ENCODE measurements at regions of chr6 and their contacts with region 1.

Region 1: GRCh38 chr6:501891-502601 is 110.5 kb downstream of the IRF4 start:
- DNase-seq: peak; percentile 4
- H3K4me3 Mint-ChIP-seq: peak overlapping the region; percentile 60
- H3K27ac Mint-ChIP-seq: no peak overlapping the region
- H3K4me1 Mint-ChIP-seq: no peaks in the 10 kb centered on the region
- H3K27me3 Mint-ChIP-seq: no peaks in the 10 kb centered on the region
- CTCF ChIP-seq: no peak

Region 2: DNA sequence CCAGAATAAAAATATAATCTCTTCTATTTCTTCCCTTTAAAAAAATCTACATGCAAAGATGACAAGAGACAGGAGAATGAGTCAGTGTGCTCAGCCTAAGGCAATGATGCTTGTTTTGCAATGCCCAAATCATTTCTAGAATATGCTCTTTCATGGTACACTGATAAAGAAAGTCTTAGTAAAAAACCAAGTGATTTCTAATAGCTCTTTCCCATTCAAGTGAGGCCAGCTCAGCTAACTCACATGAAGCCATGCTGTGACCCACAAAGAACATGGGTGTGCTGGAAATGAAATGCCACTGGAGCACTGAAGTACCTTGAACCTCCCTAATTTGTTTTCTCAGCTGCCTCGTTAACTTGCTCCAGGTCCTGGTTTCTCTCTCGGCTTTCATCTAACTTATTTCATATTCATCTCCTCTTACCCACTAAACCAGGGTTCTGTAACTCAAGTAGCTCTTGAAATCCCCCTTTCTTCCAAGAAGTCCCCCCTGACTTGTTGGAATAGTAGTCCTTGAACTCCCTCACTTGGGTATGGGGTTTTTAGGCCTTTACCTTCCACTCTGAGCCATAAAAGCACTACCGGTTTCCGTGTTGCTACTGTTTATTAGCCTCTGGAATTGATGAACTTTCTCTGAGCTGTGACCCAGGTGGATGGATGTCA is 17.8 kb before region 1 on chr6:
- CTCF ChIA-PET with region 1: no interaction called
- intact Hi-C with region 1: loop called (anchors 2 kb)
- DNase-seq: no peak
- H3K4me3 Mint-ChIP-seq: no peak overlapping the region
- H3K27ac Mint-ChIP-seq: no peak overlapping the region
- H3K4me1 Mint-ChIP-seq: no peaks in the 10 kb centered on the region
- H3K27me3 Mint-ChIP-seq: no peaks in the 10 kb centered on the region
- CTCF ChIP-seq: no peak

Region 3: GRCh38 chr6:650098-650497 is 148.1 kb after region 1 on chr6:
- CTCF ChIA-PET with region 1: no interaction called
- intact Hi-C with region 1: no loop called
- DNase-seq: no peak
- H3K4me3 Mint-ChIP-seq: no peak overlapping the region
- H3K27ac Mint-ChIP-seq: no peak overlapping the region
- H3K4me1 Mint-ChIP-seq: no peaks in the 10 kb centered on the region
- H3K27me3 Mint-ChIP-seq: no peaks in the 10 kb centered on the region
- CTCF ChIP-seq: no peak